Activated CD4-positive, alpha-beta T cell treated with anti-CD3 and anti-CD28 coated beads for 36 hours (primary cell): ENCODE measurements at regions of chr19 and their contacts with region 1.

Region 1: GRCh38 chr19:35748106-35749020 is at the start of gene LIN37:
- DNase-seq: peak; percentile 99
- ATAC-seq: peak; percentile 81
- H3K4me3 Mint-ChIP-seq: peak within 1 kb of the TSS; percentile 89
- H3K27ac Mint-ChIP-seq: peak within 1 kb of the TSS; percentile 94
- H3K4me1 Mint-ChIP-seq: peaks cover 40% of the 10 kb centered on the region
- H3K27me3 Mint-ChIP-seq: no peaks in the 10 kb centered on the region
- total RNA-seq, gene LIN37: 8.4 to 12.7 TPM

Region 2: DNA sequence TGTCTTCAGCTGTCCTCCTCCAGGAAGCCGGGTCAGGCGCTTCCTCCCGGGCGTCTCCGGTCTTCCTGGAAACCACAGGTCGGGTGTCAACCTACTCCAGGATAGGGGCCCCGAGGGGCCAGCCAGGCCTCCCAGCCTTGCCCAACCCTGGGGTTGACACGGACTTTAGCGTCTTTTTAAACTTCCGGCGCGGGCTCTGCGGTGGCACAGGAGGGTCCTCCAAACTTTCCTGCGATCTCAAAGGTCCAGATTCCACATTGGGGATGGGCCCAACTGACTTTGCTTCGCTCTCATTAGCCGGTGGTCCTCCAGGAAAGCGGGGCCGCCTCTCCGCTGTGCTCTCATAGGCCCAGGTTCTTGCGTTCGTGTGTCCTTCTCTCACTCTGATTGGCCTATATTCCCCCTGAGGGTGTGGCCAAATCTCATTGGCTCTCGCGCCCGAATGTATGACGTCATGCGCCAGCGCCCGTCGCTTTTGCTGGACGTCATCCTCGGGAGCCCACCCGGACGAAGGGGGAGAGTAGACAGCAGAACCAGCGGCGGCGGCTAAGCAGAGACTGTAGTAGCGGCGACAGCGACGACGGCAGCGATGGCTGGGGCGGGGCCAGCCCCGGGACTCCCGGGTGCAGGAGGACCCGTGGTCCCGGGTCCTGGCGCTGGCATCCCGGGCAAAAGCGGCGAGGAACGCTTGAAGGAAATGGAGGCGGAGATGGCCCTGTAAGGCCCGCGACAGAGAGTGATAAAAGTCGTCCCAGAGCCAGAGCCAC is 119.6 kb before region 1 on chr19 and contains the start of gene RBM42:
- CTCF ChIA-PET with region 1: no interaction called
- POLR2A ChIA-PET with region 1: no interaction called
- intact Hi-C with region 1: loop called in 1 of 2 experiments (anchors 1 kb)
- DNase-seq: peak; percentile 97
- ATAC-seq: peak; percentile 100
- H3K4me3 Mint-ChIP-seq: peak within 1 kb of the TSS; percentile 98
- H3K27ac Mint-ChIP-seq: peak within 1 kb of the TSS; percentile 98
- H3K4me1 Mint-ChIP-seq: peaks cover 12% of the 10 kb centered on the region
- H3K27me3 Mint-ChIP-seq: no peaks in the 10 kb centered on the region
- total RNA-seq, gene RBM42: 87.5 to 94.4 TPM

Region 3: DNA sequence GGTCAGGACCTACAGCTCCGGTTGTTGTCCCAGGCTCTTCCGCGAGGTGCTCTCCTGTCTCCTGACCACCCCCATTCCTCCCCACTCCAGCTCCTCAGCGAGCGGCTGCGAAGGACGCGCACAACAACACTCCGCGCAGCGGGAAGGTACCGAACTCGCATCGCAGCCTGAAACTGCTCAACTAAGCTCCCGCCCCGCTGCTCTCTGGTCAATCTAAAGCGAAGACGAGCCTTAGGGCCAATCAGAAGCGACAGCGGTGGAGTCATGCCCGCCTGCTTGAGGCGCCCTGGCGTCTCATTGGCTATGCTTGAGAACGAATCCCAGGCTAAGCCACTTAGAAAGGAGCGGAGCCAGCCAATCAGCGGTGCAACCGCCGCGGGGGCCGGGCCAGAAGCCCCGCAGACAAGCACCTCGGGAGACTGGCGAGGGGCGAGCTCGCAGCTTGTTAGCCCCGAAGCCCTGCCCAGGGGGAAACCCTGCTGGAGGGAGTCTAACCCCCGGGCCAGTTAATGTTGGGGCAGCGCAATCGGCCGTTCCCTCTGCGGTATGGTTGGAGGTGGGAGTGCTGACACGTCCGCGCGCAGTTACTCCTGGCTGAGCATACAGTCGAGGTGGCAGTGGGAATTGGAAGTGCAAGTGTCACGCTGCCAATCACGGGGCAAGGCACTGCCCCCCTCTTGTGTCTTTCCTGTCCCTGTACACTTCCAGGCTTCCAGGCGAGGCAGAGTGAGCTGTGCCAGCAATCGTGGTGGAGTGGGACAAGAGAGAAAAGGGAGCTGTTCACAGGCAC is 45.9 kb before region 1 on chr19:
- CTCF ChIA-PET with region 1: interaction called, 6 read pairs
- POLR2A ChIA-PET with region 1: interaction called, 13 read pairs
- intact Hi-C with region 1: loop called in 1 of 2 experiments (anchors 1 kb)
- DNase-seq: peak; percentile 97
- ATAC-seq: peak; percentile 99
- H3K4me3 Mint-ChIP-seq: peak overlapping the region; percentile 83
- H3K27ac Mint-ChIP-seq: peak overlapping the region; percentile 99
- H3K4me1 Mint-ChIP-seq: peaks cover 8% of the 10 kb centered on the region
- H3K27me3 Mint-ChIP-seq: no peaks in the 10 kb centered on the region